ENCODE measurements at regions of chr18 and their contacts with region 1.

Region 1: GRCh38 chr18:63311118-63312018 is 8.2 kb downstream of the BCL2 start:
- DNase-seq: no peak
- ATAC-seq: no peak
- H3K4me3 Mint-ChIP-seq: peak overlapping the region; percentile 25
- H3K27ac Mint-ChIP-seq: no peak overlapping the region
- H3K4me1 Mint-ChIP-seq: peaks cover 85% of the 10 kb centered on the region
- H3K27me3 Mint-ChIP-seq: no peaks in the 10 kb centered on the region

Region 2: GRCh38 chr18:63216516-63217311 is 94.7 kb before region 1 on chr18:
- CTCF ChIA-PET with region 1: interaction called, 4 read pairs
- POLR2A ChIA-PET with region 1: interaction called, 10 read pairs
- DNase-seq: peak; percentile 56
- ATAC-seq: peak; percentile 42
- H3K4me3 Mint-ChIP-seq: peak overlapping the region; percentile 72
- H3K27ac Mint-ChIP-seq: peak overlapping the region; percentile 90
- H3K4me1 Mint-ChIP-seq: peaks cover 98% of the 10 kb centered on the region
- H3K27me3 Mint-ChIP-seq: no peaks in the 10 kb centered on the region

Region 3: GRCh38 chr18:63299837-63300745 is 11.3 kb before region 1 on chr18:
- CTCF ChIA-PET with region 1: interaction called, 11 read pairs
- POLR2A ChIA-PET with region 1: interaction called, 21 read pairs
- DNase-seq: peak; percentile 70
- ATAC-seq: peak; percentile 67
- H3K4me3 Mint-ChIP-seq: peak overlapping the region; percentile 62
- H3K27ac Mint-ChIP-seq: peak overlapping the region; percentile 86
- H3K4me1 Mint-ChIP-seq: peaks cover 89% of the 10 kb centered on the region
- H3K27me3 Mint-ChIP-seq: no peaks in the 10 kb centered on the region

Region 4: DNA sequence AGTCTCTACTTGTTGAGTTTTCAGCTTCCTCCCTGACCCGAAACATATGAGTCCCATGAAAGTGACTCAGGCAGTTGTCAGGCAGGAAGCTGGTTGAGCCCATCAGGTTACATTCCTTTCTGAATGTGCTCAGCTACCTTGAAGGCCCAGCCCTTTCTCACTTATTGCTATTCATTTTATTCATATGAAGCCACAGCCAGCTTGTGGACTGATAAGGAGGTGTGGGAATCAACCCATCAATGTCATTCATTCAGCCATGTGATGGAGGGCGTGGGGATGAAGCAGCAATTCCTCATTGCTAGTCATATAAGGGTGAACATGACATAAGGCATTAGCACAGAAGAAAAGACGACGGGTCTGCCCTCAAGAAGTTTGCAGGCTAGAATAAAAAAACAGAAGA is 116.2 kb after region 1 on chr18:
- CTCF ChIA-PET with region 1: no interaction called
- POLR2A ChIA-PET with region 1: no interaction called
- DNase-seq: no peak
- ATAC-seq: no peak
- H3K4me3 Mint-ChIP-seq: no peak overlapping the region
- H3K27ac Mint-ChIP-seq: no peak overlapping the region
- H3K4me1 Mint-ChIP-seq: peaks cover 11% of the 10 kb centered on the region
- H3K27me3 Mint-ChIP-seq: peaks cover 28% of the 10 kb centered on the region

Measured in activated CD8-positive, alpha-beta T cell treated with anti-CD3 and anti-CD28 coated beads, Interleukin-2, amount 10 ng/mL, durations not matched to agents 7 days and 5 days (primary cell).